ENCODE measurements at regions of chr2 and their contacts with region 1.

Region 1: GRCh38 chr2:54330162-54330925 is 74.3 kb upstream of the TSPYL6 start:
- DNase-seq: peak; percentile 98
- H3K4me3 ChIP-seq: peak overlapping the region; percentile 57 to 75 (median 68)
- H3K27ac ChIP-seq: peak overlapping the region; percentile 83 to 97 (median 92)
- H3K4me1 ChIP-seq: peaks cover 15 to 21% (median 19%) of the 10 kb centered on the region in 4 donors
- H3K27me3 ChIP-seq: no peaks in the 10 kb centered on the region
- CTCF ChIP-seq: no peak
- EP300 ChIP-seq: no peak
- POLR2A ChIP-seq: peak; percentile 83

Region 2: DNA sequence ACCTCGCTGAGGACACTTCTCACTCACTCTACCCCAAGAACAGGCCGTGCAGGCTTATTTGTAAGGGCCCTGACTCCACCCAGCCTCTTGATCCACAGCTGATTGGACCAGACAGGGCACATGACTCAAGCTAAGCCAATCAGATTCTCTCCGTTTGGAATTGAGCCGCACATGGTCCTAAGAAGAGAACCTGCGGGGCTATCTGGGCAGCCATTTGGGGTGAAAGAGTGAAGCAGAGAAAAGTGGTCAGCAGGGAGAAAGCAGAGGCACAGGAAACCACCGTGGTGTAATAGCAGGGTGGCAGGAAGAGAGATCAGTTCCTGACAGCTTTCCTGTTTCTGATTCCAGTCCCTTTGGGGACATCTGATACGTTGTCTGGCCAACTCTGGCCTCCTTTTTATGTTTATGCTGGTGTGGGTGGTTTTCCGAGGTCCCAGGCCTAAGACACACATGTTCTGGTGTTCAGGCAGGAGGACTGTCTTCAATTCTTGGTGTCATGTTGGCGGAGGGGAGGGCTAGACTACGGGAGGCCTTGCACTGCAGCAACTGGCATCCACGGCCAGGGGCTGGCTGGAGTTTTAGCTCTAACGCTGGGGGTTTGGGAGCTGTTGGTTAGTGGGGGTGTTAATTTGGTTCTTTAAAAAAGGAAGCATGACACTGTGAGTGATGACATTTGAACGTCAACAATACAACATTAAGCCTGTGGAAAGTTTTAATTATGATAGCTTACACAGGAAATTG is 99.6 kb after region 1 on chr2:
- intact Hi-C with region 1: loop called (anchors 10 kb)
- DNase-seq: peak; percentile 81
- H3K4me3 ChIP-seq: no peak overlapping the region
- H3K27ac ChIP-seq: peak overlapping the region; percentile 73 to 84 (median 77)
- H3K4me1 ChIP-seq: peaks cover 61 to 76% (median 74%) of the 10 kb centered on the region in 4 donors
- H3K27me3 ChIP-seq: no peaks in the 10 kb centered on the region
- CTCF ChIP-seq: no peak
- EP300 ChIP-seq: no peak
- POLR2A ChIP-seq: no peak

Region 3: GRCh38 chr2:54512663-54513362 is 182.5 kb after region 1 on chr2:
- intact Hi-C with region 1: no loop called
- DNase-seq: no peak
- H3K4me3 ChIP-seq: no peak overlapping the region
- H3K27ac ChIP-seq: peak overlapping the region in 1 of 4 donors; percentile 20
- H3K4me1 ChIP-seq: peaks cover 57 to 91% (median 82%) of the 10 kb centered on the region in 4 donors
- H3K27me3 ChIP-seq: no peaks in the 10 kb centered on the region
- CTCF ChIP-seq: no peak
- EP300 ChIP-seq: no peak
- POLR2A ChIP-seq: no peak

Measured in esophagus muscularis mucosa (tissue), 4 donors.